Breast epithelium (tissue), 4 donors: ENCODE measurements at regions of chr19 and their contacts with region 1.

Region 1: DNA sequence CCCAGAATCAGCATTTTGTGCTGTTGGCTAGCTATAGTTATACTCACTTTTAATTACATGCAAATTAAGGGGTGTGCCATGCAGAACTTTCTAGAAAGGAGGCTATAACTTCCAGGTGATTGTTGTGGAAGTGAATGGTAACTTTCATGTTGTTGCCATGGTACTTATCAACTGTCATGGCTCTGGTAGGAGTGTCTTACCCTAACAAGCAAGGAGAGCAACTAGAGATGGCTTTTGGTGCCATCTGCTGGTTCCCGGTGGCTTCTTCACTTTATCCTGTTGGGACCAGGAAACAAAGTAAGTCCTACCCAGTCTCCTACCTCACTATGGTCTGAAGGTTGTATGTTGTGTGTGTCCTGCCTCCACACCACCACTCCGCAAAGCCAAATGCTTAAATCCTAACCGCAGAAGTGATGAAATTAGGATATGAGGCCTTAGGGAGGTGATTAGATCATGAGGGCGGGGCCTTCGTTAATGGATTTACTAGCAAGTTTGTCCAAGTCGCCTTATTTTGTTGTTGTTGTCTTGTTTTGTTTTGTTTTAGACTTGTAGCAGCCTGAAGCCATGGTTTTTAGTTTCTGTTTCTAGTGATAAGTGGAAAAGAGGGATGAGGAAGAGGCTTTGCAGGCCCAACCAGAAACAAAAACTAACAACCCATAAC is 22.6 kb downstream of the FBXL12 start:
- DNase-seq: peak; percentile 79 to 85
- H3K4me3 ChIP-seq: no peak overlapping the region
- H3K27ac ChIP-seq: peak overlapping the region; percentile 6 to 30
- H3K4me1 ChIP-seq: no peaks in the 10 kb centered on the region
- H3K27me3 ChIP-seq: no peaks in the 10 kb centered on the region
- CTCF ChIP-seq: peak; percentile 45 to 85 (median 83)
- POLR2A ChIP-seq: no peak

Region 2: DNA sequence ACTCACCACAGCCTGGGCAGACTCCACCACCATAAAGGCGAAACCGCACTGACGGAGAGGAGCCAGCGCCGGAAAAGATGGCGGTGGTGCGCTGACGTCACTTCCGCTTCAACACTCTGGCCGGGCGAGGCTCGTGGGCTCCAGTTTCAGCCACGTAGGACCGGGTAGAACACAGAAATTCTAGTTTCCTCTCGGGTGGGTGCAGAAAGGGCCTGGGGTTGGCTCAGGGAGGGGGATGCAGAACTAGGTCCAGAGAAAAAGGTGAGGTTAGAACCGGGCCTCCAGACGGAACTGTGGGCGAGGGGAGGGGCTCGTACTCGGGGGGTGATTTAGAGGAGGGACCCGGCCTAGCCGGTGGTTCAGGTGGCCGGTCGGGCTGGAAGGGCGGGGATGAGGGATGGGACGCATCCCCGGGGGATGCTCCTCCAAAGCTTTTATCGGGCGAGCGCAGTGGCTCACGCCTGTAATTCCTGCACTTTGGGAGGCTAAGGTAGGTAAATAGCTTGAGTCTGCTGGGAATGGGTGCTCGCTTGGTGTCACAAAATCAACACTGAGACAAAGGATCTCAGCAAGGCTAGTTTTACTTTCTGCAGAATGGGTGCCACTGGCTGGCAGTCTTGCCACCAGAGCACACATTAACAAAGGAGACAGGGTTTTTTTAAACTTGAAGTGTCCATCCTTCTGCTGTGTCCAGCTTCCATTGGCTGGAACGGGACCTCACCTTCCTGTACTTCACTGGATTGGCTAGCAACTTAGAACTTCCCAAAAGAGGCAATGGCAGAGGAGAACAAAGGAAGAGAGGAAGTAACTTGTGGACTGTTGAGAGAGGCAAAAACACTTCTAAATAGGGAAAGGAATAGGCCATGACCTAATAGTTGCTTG is 174.8 kb before region 1 on chr19 and contains the start of gene ZNF561:
- intact Hi-C with region 1: loop called (anchors 10 kb)
- DNase-seq: peak; percentile 81 to 85
- H3K4me3 ChIP-seq: peak within 1 kb of the TSS; percentile 70 to 96 (median 72)
- H3K27ac ChIP-seq: peak within 1 kb of the TSS; percentile 93 to 94
- H3K4me1 ChIP-seq: no peaks in the 10 kb centered on the region
- H3K27me3 ChIP-seq: no peaks in the 10 kb centered on the region
- CTCF ChIP-seq: no peak
- POLR2A ChIP-seq: no peak
- total RNA-seq, gene ZNF561: 19.5 to 63.1 (median 29.5) TPM

Region 3: GRCh38 chr19:9885077-9885552 is 88.9 kb after region 1 on chr19:
- intact Hi-C with region 1: no loop called
- DNase-seq: no peak
- H3K4me3 ChIP-seq: no peak overlapping the region
- H3K27ac ChIP-seq: no peak overlapping the region
- H3K4me1 ChIP-seq: no peaks in the 10 kb centered on the region
- H3K27me3 ChIP-seq: no peaks in the 10 kb centered on the region
- CTCF ChIP-seq: no peak
- POLR2A ChIP-seq: no peak